ENCODE measurements at regions of chr2 and their contacts with region 1.

Region 1: DNA sequence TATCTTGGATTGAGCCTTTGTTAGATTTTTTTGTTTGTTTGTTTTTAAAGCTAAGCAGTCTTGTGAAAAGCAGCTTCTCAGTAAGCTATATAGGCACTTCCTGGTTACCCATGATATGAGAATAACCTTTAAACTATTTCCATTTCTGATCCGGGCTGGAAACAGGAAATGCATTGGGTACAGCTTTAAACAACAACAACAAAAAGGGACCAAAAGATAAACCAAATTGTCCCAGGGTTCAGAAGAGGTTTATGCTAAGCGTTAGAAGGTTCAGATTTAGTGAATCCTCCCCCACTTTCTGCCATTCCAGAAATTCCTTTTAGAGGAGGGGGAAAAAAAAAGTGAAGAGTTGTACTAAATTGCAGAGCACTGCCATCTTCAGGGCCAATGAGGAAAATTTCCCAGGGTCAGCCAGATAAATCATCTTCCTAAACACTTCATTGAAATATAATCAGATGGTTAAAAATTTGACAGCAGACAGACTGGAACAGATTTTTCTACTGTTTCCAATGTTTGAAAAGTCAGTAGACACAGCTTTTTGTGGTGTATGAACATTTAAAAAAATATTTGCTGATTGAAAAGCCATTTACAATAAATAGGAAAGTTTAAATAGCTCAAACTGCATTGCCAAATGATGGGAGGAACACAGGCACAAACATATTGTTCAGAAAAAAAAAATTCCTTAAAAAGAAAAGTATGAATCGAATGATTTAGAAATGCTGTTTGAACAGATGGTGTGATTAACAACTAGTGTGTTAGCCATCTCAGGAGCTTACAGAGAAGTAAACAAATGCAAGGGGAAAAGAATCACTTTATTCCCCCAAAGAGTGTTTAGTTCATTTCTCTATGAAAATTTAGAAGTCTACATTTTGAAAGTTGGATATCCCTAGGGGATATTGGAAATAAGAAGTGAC is 189.9 kb upstream of the TANK start:
- DNase-seq: peak; percentile 61 to 73
- H3K4me3 ChIP-seq: peak overlapping the region; percentile 6; the same call in 1 of the 2 replicates
- H3K4me3 Mint-ChIP-seq: peak overlapping the region; percentile 68
- H3K27ac Mint-ChIP-seq: peak overlapping the region; percentile 91
- H3K4me1 ChIP-seq: no peaks in the 10 kb centered on the region
- H3K4me1 Mint-ChIP-seq: no peaks in the 10 kb centered on the region
- H3K27me3 ChIP-seq: no peaks in the 10 kb centered on the region
- H3K27me3 Mint-ChIP-seq: no peaks in the 10 kb centered on the region
- CTCF ChIP-seq: peak; percentile 77 to 79

Region 2: GRCh38 chr2:160109936-160110673 is 860.2 kb before region 1 on chr2:
- CTCF ChIA-PET with region 1: interaction called, 16 read pairs
- POLR2A ChIA-PET with region 1: no interaction called
- intact Hi-C with region 1: loop called (anchors 1 kb)
- DNase-seq: peak; percentile 47 to 74
- H3K4me3 ChIP-seq: no peak overlapping the region
- H3K4me3 Mint-ChIP-seq: no peak overlapping the region
- H3K27ac Mint-ChIP-seq: no peak overlapping the region
- H3K4me1 ChIP-seq: no peaks in the 10 kb centered on the region
- H3K4me1 Mint-ChIP-seq: no peaks in the 10 kb centered on the region
- H3K27me3 ChIP-seq: no peaks in the 10 kb centered on the region
- H3K27me3 Mint-ChIP-seq: no peaks in the 10 kb centered on the region
- CTCF ChIP-seq: peak; percentile 76 to 84

Region 3: GRCh38 chr2:160269803-160270570 is 700.3 kb before region 1 on chr2:
- CTCF ChIA-PET with region 1: interaction called, 11 read pairs
- POLR2A ChIA-PET with region 1: interaction called, 3 read pairs
- intact Hi-C with region 1: no loop called
- DNase-seq: peak; percentile 90 to 92
- H3K4me3 ChIP-seq: peak overlapping the region; percentile 65
- H3K4me3 Mint-ChIP-seq: peak overlapping the region; percentile 92
- H3K27ac Mint-ChIP-seq: peak overlapping the region; percentile 98
- H3K4me1 ChIP-seq: peaks cover 29% of the 10 kb centered on the region
- H3K4me1 Mint-ChIP-seq: peaks cover 13% of the 10 kb centered on the region
- H3K27me3 ChIP-seq: no peaks in the 10 kb centered on the region
- H3K27me3 Mint-ChIP-seq: no peaks in the 10 kb centered on the region
- CTCF ChIP-seq: peak; percentile 48 to 82

Region 4: DNA sequence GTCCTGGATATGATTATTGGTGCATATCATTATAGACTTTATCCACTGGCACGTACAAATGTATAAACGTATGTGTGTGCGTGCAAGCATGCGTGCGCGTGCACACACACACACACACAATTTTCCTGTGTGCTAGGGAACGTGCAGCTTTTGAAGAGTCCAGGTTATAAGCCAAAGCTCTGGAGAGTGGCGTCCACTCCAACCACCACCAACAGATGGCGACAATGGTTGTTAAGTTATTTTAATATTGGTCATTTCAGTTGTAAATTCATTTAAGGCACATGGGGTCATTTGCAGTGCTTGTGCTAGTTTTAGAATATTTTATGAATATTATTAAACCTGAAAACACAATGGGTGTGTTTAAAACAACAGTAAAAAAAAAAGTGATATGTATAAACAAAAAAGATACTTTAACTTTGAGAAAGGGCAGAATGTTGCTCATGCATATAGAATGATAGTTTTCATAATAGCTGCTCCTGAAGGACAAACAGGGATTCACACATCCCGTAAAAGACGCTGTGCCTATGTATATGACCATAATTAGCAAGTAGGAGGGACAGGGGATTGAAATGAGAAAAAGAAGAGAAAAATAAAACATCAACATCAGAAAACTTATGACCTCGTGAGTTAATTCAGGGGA is 646.0 kb before region 1 on chr2:
- CTCF ChIA-PET with region 1: interaction called, 14 read pairs
- POLR2A ChIA-PET with region 1: no interaction called
- intact Hi-C with region 1: loop called (anchors 1 kb)
- DNase-seq: peak; percentile 47 to 66
- H3K4me3 ChIP-seq: no peak overlapping the region
- H3K4me3 Mint-ChIP-seq: no peak overlapping the region
- H3K27ac Mint-ChIP-seq: no peak overlapping the region
- H3K4me1 ChIP-seq: peaks cover 13% of the 10 kb centered on the region
- H3K4me1 Mint-ChIP-seq: peaks cover 26% of the 10 kb centered on the region
- H3K27me3 ChIP-seq: no peaks in the 10 kb centered on the region
- H3K27me3 Mint-ChIP-seq: no peaks in the 10 kb centered on the region
- CTCF ChIP-seq: peak; percentile 70 to 74

Region 5: DNA sequence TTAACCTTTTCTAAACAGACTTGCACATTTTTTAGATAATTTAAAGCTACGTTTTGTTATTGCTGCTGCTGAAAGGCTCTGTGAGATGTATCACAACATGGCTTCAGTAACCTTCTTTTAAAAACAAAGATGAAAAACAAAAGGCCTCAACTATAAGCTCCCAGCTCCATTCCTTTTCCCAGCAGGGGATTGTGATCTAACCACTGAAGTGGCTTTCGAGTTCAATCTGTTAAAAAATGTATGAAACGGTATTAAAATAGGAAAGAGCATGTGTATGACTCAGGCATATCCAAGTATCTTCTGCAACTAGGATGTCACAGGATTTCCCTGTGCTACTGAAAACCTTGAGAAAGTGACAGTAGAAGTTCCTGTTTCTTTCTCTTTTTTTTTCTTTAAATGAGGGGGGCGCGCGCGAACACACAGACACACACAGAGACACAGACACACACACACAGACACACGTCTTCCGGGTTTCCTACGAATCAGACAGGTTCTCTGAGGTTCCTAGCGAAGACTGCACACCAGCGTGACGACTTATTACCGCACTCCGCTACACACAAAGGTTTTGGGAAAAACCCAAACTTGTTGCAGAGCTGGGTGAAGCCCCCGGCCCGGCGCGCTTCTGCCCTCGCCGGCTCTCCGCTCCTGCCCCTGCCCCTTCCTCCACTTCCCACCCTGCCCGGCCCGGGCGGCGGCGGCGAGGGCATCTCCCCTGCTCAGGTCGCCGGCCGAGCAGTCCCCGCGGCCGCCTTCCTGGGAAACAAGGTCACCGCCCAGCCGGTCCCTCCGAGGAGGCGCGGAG is 563.5 kb before region 1 on chr2:
- CTCF ChIA-PET with region 1: interaction called, 5 read pairs
- POLR2A ChIA-PET with region 1: no interaction called
- intact Hi-C with region 1: loop called (anchors 5 kb)
- DNase-seq: peak; percentile 57
- H3K4me3 ChIP-seq: peak overlapping the region; percentile 90
- H3K4me3 Mint-ChIP-seq: peak overlapping the region; percentile 75
- H3K27ac Mint-ChIP-seq: peak overlapping the region; percentile 95
- H3K4me1 ChIP-seq: peaks cover 38% of the 10 kb centered on the region
- H3K4me1 Mint-ChIP-seq: peaks cover 48% of the 10 kb centered on the region
- H3K27me3 ChIP-seq: no peaks in the 10 kb centered on the region
- H3K27me3 Mint-ChIP-seq: no peaks in the 10 kb centered on the region
- CTCF ChIP-seq: no peak

Region 6: GRCh38 chr2:160493227-160494028 is 476.9 kb before region 1 on chr2 and contains the start of gene RBMS1:
- CTCF ChIA-PET with region 1: no interaction called
- POLR2A ChIA-PET with region 1: no interaction called
- intact Hi-C with region 1: loop called (anchors 1 kb)
- DNase-seq: peak; percentile 57 to 68
- H3K4me3 ChIP-seq: peak within 1 kb of the TSS; percentile 94
- H3K4me3 Mint-ChIP-seq: peak within 1 kb of the TSS; percentile 91
- H3K27ac Mint-ChIP-seq: peak within 1 kb of the TSS; percentile 64
- H3K4me1 ChIP-seq: peaks cover 12% of the 10 kb centered on the region
- H3K4me1 Mint-ChIP-seq: peaks cover 10% of the 10 kb centered on the region
- H3K27me3 ChIP-seq: no peaks in the 10 kb centered on the region
- H3K27me3 Mint-ChIP-seq: peaks cover 3% of the 10 kb centered on the region
- CTCF ChIP-seq: no peak
- total RNA-seq, gene RBMS1: 91.9 and 92.2 TPM in 2 replicates

Region 7: GRCh38 chr2:160836755-160837154 is 133.6 kb before region 1 on chr2:
- CTCF ChIA-PET with region 1: no interaction called
- POLR2A ChIA-PET with region 1: no interaction called
- intact Hi-C with region 1: no loop called
- DNase-seq: no peak
- H3K4me3 ChIP-seq: no peak overlapping the region
- H3K4me3 Mint-ChIP-seq: no peak overlapping the region
- H3K27ac Mint-ChIP-seq: no peak overlapping the region
- H3K4me1 ChIP-seq: 0 out of 2 replicates have a peak, but pooled peaks cover 5% of the 10 kb centered on the region
- H3K4me1 Mint-ChIP-seq: peaks cover 6% of the 10 kb centered on the region
- H3K27me3 ChIP-seq: no peaks in the 10 kb centered on the region
- H3K27me3 Mint-ChIP-seq: no peaks in the 10 kb centered on the region
- CTCF ChIP-seq: no peak

Region 8: GRCh38 chr2:161090411-161090810 is 120.1 kb after region 1 on chr2:
- CTCF ChIA-PET with region 1: no interaction called
- POLR2A ChIA-PET with region 1: no interaction called
- intact Hi-C with region 1: no loop called
- DNase-seq: no peak
- H3K4me3 ChIP-seq: no peak overlapping the region
- H3K4me3 Mint-ChIP-seq: no peak overlapping the region
- H3K27ac Mint-ChIP-seq: no peak overlapping the region
- H3K4me1 ChIP-seq: no peaks in the 10 kb centered on the region
- H3K4me1 Mint-ChIP-seq: peaks cover 5% of the 10 kb centered on the region
- H3K27me3 ChIP-seq: no peaks in the 10 kb centered on the region
- H3K27me3 Mint-ChIP-seq: no peaks in the 10 kb centered on the region
- CTCF ChIP-seq: no peak